CD8-positive, alpha-beta memory T cell (primary cell): ENCODE measurements at regions of chr19 and their contacts with region 1.

Region 1: DNA sequence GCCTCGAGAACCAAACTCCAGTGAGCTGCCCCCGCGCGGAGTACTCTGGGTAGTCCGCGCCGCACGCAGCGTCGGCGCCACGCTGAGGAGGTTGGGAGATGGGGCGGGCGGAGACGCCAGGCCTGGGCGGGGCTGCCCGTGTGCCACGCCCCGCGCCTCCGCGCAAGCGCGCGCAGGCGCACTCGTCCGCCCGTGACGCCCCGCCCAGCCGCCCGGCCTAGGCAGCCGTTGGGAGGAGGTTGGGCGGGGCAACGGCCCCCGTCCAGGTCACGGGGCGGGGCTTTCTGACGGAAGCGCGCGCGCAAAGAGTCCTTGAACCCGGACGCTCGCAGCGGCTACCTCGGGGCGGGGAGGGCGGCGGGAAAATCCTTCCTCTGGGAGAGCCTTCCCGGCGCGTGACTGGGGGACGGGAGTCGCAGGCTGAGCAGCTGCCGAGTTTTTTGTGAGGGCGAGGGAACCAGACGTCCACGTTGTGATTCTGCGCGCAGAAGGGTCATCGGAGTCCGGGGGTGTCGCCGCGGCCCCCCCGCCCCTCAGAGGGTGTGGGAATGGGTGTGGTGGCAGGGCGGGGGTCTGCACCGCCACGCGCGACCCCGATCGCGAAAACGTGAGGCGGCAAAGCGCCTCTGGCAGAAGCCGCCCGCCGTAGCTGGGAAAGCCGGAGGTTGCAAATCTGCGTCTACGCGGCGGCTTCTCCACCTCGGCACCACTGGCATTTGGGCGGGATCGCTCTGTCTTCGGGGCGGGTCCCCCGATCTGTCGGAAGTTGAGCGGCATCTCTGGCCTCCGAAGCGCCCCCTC is at the start of gene MED26:
- DNase-seq: peak; percentile 91 to 97 (median 93)
- H3K4me3 ChIP-seq: peak within 1 kb of the TSS; percentile 83
- H3K4me3 Mint-ChIP-seq: peak within 1 kb of the TSS; percentile 95 to 99 (median 98)
- H3K27ac ChIP-seq: peak within 1 kb of the TSS; percentile 90
- H3K27ac Mint-ChIP-seq: peak within 1 kb of the TSS; percentile 90 to 100 (median 96)
- H3K4me1 ChIP-seq: peaks cover 30% of the 10 kb centered on the region
- H3K4me1 Mint-ChIP-seq: peaks cover 37 to 52% (median 47%) of the 10 kb centered on the region in 3 donors
- H3K27me3 ChIP-seq: no peaks in the 10 kb centered on the region
- H3K27me3 Mint-ChIP-seq: no peaks in the 10 kb centered on the region
- total RNA-seq, gene MED26: 14.7 to 17.1 TPM

Region 2: DNA sequence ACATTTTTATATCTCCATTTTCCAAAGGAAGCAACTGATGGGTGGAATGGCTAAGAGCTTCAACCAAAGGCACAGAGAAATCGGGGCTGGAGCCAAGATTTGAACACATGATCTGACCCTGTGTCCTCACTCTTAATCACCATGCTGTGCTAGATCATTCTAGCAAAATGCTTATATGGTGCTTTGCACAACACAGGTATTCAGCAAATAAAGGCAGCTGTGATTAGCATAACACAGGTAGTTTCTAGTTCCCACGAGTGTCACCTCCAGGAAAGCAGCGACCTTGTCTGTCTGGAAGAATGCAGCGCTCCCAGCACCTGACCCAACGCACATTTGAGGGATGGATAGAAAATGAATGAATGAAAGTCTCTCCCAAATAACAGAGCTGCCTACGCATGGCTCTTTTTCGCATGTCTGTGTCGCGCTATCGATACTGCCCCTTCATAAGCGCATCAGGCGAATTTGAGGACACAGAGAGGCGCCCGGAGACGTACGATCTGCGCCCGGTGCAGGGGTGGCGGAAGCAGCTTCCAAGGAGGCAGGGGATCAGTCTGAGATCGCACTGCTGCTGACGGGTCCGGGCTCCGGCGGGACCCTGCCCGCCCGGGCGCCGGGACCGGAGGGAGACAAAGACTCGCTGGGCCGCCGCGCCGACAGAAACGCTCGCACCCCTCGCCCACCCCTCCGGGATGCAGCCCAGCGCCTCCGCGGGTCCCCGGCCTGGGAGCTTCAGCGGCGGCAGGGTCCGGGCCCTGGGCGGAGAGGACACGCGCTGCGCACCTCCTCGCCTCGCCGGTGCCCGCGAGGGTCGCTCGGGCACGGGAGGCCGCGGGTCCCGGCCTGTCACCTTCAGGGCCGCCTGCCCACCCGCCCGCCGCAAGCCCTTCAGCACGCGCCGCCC is 157.2 kb before region 1 on chr19:
- CTCF ChIA-PET with region 1: no interaction called
- POLR2A ChIA-PET with region 1: no interaction called
- DNase-seq: peak in 3 of 5 donors; percentile 1 to 47 (median 23)
- H3K4me3 ChIP-seq: peak overlapping the region; percentile 50
- H3K4me3 Mint-ChIP-seq: peak overlapping the region; percentile 84 to 92 (median 89)
- H3K27ac ChIP-seq: no peak overlapping the region
- H3K27ac Mint-ChIP-seq: peak overlapping the region in 7 of 8 donors; percentile 74 to 90 (median 79)
- H3K4me1 ChIP-seq: peaks cover 16% of the 10 kb centered on the region
- H3K4me1 Mint-ChIP-seq: peaks cover 35 to 47% (median 41%) of the 10 kb centered on the region in 3 donors
- H3K27me3 ChIP-seq: no peaks in the 10 kb centered on the region
- H3K27me3 Mint-ChIP-seq: no peaks in the 10 kb centered on the region

Region 3: GRCh38 chr19:16584248-16585141 is 43.9 kb before region 1 on chr19:
- CTCF ChIA-PET with region 1: interaction called, 4 read pairs
- POLR2A ChIA-PET with region 1: interaction called, 15 read pairs
- DNase-seq: peak; percentile 89 to 96 (median 95)
- H3K4me3 ChIP-seq: peak overlapping the region; percentile 74
- H3K4me3 Mint-ChIP-seq: peak overlapping the region; percentile 74 to 92 (median 79)
- H3K27ac ChIP-seq: peak overlapping the region; percentile 63
- H3K27ac Mint-ChIP-seq: peak overlapping the region; percentile 81 to 100 (median 97)
- H3K4me1 ChIP-seq: peaks cover 81% of the 10 kb centered on the region
- H3K4me1 Mint-ChIP-seq: peaks cover 77 to 94% (median 82%) of the 10 kb centered on the region in 3 donors
- H3K27me3 ChIP-seq: no peaks in the 10 kb centered on the region
- H3K27me3 Mint-ChIP-seq: peaks cover 0 to 4% of the 10 kb centered on the region in 2 donors

Region 4: GRCh38 chr19:16641695-16642094 is 13.3 kb after region 1 on chr19:
- CTCF ChIA-PET with region 1: no interaction called
- POLR2A ChIA-PET with region 1: no interaction called
- DNase-seq: no peak
- H3K4me3 ChIP-seq: no peak overlapping the region
- H3K4me3 Mint-ChIP-seq: no peak overlapping the region
- H3K27ac ChIP-seq: no peak overlapping the region
- H3K27ac Mint-ChIP-seq: no peak overlapping the region
- H3K4me1 ChIP-seq: no peaks in the 10 kb centered on the region
- H3K4me1 Mint-ChIP-seq: peaks cover 19 to 39% (median 30%) of the 10 kb centered on the region in 3 donors
- H3K27me3 ChIP-seq: no peaks in the 10 kb centered on the region
- H3K27me3 Mint-ChIP-seq: no peaks in the 10 kb centered on the region

Region 5: DNA sequence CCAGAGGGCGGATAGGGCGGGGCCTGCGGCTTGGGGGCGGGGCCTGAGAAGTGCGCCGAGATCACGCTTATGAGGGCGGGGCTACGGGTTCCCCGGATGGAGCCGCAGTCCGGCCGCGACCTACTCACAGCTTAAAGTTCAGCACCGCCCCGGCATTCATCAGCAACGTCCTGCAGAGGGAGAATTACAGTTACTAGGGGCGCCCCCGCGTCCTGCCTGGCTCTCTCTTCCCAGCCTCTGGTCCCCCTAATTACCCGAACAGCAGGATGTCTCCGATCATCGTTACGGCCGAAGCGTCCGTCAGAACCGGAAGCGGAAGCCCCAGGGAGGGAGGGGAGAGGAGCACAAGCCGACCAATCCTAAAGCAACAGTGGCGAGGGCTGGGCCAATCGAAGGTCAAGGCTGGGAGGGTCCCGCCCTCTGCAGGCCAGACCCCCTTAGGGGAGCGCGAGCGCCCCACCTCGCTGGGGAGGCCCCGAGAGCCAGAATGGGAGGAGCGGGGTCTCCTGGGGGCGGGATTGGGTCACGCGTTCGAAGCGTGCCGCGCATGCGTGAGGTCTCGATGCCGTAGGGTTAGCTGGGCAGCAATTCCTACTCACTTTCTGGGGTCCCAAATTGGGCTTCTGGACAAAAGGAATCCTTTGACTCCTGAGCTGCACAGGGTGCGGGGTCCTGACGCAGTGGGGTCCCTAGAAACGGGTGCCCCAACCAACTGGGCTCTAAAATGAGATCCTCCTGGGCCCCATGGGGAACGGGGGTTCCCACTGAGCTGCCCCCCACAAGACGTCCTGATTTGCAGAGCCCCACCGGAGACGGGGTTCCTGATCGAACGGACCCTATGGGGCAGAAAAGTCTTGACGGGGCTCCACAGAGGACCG is 31.7 kb after region 1 on chr19 and contains the start of gene SMIM7:
- CTCF ChIA-PET with region 1: interaction called, 8 read pairs
- POLR2A ChIA-PET with region 1: interaction called, 20 read pairs
- DNase-seq: peak; percentile 98 to 100 (median 99)
- H3K4me3 ChIP-seq: peak within 1 kb of the TSS; percentile 98
- H3K4me3 Mint-ChIP-seq: peak within 1 kb of the TSS; percentile 97 to 100 (median 99)
- H3K27ac ChIP-seq: peak within 1 kb of the TSS; percentile 92
- H3K27ac Mint-ChIP-seq: peak within 1 kb of the TSS; percentile 94 to 99 (median 98)
- H3K4me1 ChIP-seq: peaks cover 34% of the 10 kb centered on the region
- H3K4me1 Mint-ChIP-seq: peaks cover 35 to 61% (median 45%) of the 10 kb centered on the region in 3 donors
- H3K27me3 ChIP-seq: no peaks in the 10 kb centered on the region
- H3K27me3 Mint-ChIP-seq: peaks cover 2 to 3% of the 10 kb centered on the region in 2 donors
- total RNA-seq, gene SMIM7: 61.7 to 64.5 TPM

Region 6: GRCh38 chr19:16671652-16672274 is 43.4 kb after region 1 on chr19:
- CTCF ChIA-PET with region 1: no interaction called
- POLR2A ChIA-PET with region 1: no interaction called
- DNase-seq: no peak
- H3K4me3 ChIP-seq: no peak overlapping the region
- H3K4me3 Mint-ChIP-seq: no peak overlapping the region
- H3K27ac ChIP-seq: no peak overlapping the region
- H3K27ac Mint-ChIP-seq: no peak overlapping the region
- H3K4me1 ChIP-seq: no peaks in the 10 kb centered on the region
- H3K4me1 Mint-ChIP-seq: no peaks in the 10 kb centered on the region
- H3K27me3 ChIP-seq: no peaks in the 10 kb centered on the region
- H3K27me3 Mint-ChIP-seq: peaks cover 0 to 7% of the 10 kb centered on the region in 2 donors

Region 7: GRCh38 chr19:16714702-16715287 is 86.4 kb after region 1 on chr19:
- CTCF ChIA-PET with region 1: no interaction called
- POLR2A ChIA-PET with region 1: no interaction called
- DNase-seq: peak in 4 of 5 donors; percentile 10 to 54 (median 20)
- H3K4me3 ChIP-seq: no peak overlapping the region
- H3K4me3 Mint-ChIP-seq: no peak overlapping the region
- H3K27ac ChIP-seq: no peak overlapping the region
- H3K27ac Mint-ChIP-seq: no peak overlapping the region
- H3K4me1 ChIP-seq: peaks cover under 1% of the 10 kb centered on the region
- H3K4me1 Mint-ChIP-seq: peaks cover 0 to 6% (median 4%) of the 10 kb centered on the region in 3 donors
- H3K27me3 ChIP-seq: no peaks in the 10 kb centered on the region
- H3K27me3 Mint-ChIP-seq: peaks cover 5 to 16% of the 10 kb centered on the region in 2 donors